Endothelial cell of umbilical vein (primary cell): ENCODE measurements at regions of chr3 and their contacts with region 1.

Region 1: DNA sequence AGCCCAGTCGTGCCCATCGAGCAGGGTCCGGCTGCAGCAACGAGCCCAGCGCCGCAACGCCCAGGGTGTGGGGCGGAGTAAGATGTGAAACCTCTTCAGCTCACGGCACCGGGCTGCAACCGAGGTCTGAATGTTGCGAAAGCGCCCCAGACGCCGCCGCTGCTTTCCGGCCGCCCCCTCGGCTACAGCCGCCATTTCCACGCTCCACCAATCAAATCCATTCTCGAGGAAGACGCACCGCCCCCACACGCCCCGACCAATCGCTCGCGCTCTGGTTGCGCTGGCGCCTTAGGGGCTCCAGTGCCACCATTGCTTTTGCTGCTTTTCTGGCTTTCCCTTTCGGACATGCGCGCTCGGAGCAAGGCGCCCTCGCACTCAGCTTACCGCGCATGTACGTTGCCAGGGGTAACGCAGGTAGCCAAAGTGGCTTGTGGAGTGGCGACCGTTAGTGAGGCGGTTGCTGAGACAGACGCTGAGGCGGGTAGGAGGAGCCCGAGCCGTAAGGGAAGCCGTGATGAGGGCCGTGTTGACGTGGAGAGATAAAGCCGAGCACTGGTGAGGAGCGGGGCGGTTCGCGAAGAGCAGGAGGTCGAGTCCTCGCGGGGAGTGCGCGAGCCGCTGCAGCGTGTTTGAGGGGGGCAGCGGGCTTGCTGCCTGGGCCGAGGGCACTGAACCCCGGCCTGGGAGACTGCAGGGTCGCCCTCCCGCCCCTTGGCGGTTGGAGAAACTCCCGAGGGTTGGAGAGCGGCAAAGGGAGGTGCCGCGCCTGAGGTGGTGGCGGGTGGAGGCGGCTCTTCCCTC is at the starts of genes IFT122 and MBD4:
- DNase-seq: peak; percentile 100
- H3K4me3 ChIP-seq: peak within 1 kb of the TSS; percentile 70 to 81 (median 72)
- H3K27ac ChIP-seq: peak within 1 kb of the TSS; percentile 75
- H3K4me1 ChIP-seq: peaks cover 44% of the 10 kb centered on the region
- H3K27me3 ChIP-seq: no peaks in the 10 kb centered on the region
- CTCF ChIP-seq: no peak
- POLR2A ChIP-seq: peak; percentile 79
- total RNA-seq, gene IFT122: 36.6 and 41.7 TPM in 2 replicates
- total RNA-seq, gene MBD4: 33.2 and 39.5 TPM in 2 replicates

Region 2: GRCh38 chr3:129399145-129399894 is 40.7 kb before region 1 on chr3:
- CTCF ChIA-PET with region 1: interaction called, 3 read pairs
- POLR2A ChIA-PET with region 1: no interaction called
- dilution Hi-C with region 1: no loop called
- intact Hi-C with region 1: loop called (anchors 2 kb)
- DNase-seq: peak; percentile 95
- H3K4me3 ChIP-seq: peak overlapping the region; percentile 74 to 82 (median 81)
- H3K27ac ChIP-seq: peak overlapping the region; percentile 84
- H3K4me1 ChIP-seq: peaks cover 4% of the 10 kb centered on the region
- H3K27me3 ChIP-seq: no peaks in the 10 kb centered on the region
- CTCF ChIP-seq: peak; percentile 70 to 84
- POLR2A ChIP-seq: peak; percentile 64

Region 3: GRCh38 chr3:129428376-129429079 is 11.5 kb before region 1 on chr3 and contains the start of gene EFCAB12:
- CTCF ChIA-PET with region 1: interaction called, 13 read pairs
- POLR2A ChIA-PET with region 1: interaction called, 4 read pairs
- dilution Hi-C with region 1: no loop called
- intact Hi-C with region 1: loop called (anchors 1 kb)
- DNase-seq: peak; percentile 97
- H3K4me3 ChIP-seq: peak within 1 kb of the TSS; percentile 17 to 45 (median 40)
- H3K27ac ChIP-seq: no peak within 1 kb of the TSS
- H3K4me1 ChIP-seq: peaks cover 6% of the 10 kb centered on the region
- H3K27me3 ChIP-seq: peaks cover 0 to 4% of the 10 kb centered on the region in 2 experiments
- CTCF ChIP-seq: no peak
- POLR2A ChIP-seq: no peak
- total RNA-seq, gene EFCAB12: 0.25 and 0.49 TPM in 2 replicates

Region 4: GRCh38 chr3:129503471-129504291 is 63.7 kb after region 1 on chr3:
- CTCF ChIA-PET with region 1: no interaction called
- POLR2A ChIA-PET with region 1: no interaction called
- dilution Hi-C with region 1: no loop called
- intact Hi-C with region 1: no loop called
- DNase-seq: no peak
- H3K4me3 ChIP-seq: no peak overlapping the region
- H3K27ac ChIP-seq: no peak overlapping the region
- H3K4me1 ChIP-seq: peaks cover 21% of the 10 kb centered on the region
- H3K27me3 ChIP-seq: no peaks in the 10 kb centered on the region
- CTCF ChIP-seq: no peak
- POLR2A ChIP-seq: no peak

Region 5: DNA sequence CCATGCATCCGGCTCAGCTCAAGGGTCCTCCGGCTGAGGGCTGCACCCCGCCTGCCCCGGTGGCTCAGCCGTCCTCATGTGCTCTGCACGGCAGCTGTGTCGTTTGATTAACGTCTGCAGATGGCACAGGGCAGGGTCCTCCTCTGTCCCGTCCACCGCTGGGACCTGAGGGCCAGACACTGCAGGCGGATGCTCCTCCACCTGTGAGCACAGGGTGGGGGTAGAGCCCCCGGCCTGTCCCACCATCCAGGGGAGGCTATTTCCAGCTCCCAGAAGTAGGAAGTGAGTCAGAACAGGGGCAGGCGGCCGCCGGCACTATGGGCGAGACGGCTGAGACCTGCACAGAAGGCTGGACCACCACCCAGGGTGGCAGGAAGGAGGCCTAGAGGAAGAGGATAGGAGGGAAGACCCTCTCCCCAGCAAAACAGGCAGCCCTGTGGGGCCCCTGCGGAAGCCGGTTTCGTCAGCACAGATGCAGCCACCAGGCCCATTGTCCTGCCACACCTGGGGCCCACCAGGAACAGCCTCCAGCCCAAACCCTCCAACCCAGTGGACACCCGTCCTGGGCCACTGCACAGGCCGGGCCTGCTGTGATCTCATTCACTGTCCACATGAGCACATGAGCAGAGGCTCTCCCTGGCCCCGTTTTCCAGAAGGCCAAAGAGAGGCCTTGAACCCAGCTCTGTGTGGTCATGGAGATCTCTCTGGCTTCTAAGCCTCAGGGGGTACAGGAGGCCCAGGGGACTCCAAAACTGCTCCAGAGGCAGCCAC is 179.1 kb after region 1 on chr3:
- CTCF ChIA-PET with region 1: no interaction called
- POLR2A ChIA-PET with region 1: no interaction called
- dilution Hi-C with region 1: no loop called
- intact Hi-C with region 1: loop called (anchors 1 kb)
- DNase-seq: peak; percentile 72
- H3K4me3 ChIP-seq: peak overlapping the region in 1 of 3 experiments; percentile 27
- H3K27ac ChIP-seq: peak overlapping the region; percentile 72
- H3K4me1 ChIP-seq: peaks cover 57% of the 10 kb centered on the region
- H3K27me3 ChIP-seq: no peaks in the 10 kb centered on the region
- CTCF ChIP-seq: no peak
- POLR2A ChIP-seq: no peak